ENCODE measurements at regions of chr15 and their contacts with region 1.

Region 1: DNA sequence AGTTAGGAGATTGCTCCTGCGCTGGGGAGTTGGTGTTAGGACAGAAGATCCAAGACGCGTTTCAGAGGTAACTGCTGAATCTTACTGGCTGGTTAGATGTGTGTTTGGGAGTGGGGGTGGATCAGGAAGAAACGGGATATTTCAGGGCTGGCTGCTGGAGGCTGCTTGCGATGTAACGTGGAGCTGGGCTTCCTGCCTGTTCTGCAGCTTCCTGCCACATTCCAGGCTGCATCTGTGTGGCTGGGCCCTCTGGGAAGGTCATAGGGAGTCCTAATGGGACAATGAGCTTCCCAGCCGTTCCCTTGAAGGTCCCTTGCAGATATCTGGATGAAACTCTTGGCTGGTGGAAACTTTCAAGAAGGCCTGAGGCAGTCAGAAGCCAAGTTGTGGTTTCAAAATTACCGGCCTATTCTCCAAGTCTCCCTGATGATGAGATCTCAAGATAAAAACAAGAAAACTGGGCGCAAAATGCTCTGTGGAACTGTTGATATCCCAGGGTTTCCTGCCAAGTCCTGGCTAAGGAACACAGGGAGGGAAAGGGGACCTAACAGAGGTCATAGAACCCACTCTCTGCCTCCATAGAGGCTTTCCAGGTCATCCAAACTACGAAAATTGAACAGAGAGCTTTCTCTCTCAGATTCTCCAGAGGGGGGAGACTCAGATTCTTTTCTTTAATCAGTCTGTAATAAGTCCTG is 67.0 kb downstream of the NOX5 start:
- DNase-seq: peak; percentile 55
- H3K4me3 ChIP-seq: peak overlapping the region; percentile 53
- H3K27ac ChIP-seq: peak overlapping the region; percentile 93
- H3K4me1 ChIP-seq: peaks cover 62% of the 10 kb centered on the region
- H3K27me3 ChIP-seq: no peaks in the 10 kb centered on the region
- CTCF ChIP-seq: no peak

Region 2: DNA sequence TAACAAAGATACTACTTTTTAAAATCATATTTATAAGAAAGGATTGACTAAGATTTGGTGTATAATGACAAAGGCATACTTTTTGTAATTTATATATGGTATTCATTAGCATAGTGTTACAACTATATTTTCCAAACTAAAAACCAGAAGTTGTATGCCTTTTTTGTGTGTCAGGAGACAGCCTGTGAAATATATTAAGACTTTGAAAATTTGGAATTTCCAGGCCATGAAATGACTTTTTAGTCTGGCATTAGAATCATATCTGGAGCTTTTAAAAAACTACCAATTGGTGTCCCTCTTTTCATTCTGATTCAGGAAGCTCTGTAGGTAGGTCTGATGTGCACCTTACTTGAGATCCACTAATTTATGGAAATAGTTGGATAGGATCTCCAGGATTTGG is 918.3 kb before region 1 on chr15:
- CTCF ChIA-PET with region 1: no interaction called
- POLR2A ChIA-PET with region 1: interaction called, 32 read pairs
- intact Hi-C with region 1: no loop called
- DNase-seq: no peak
- H3K4me3 ChIP-seq: no peak overlapping the region
- H3K27ac ChIP-seq: no peak overlapping the region
- H3K4me1 ChIP-seq: no peaks in the 10 kb centered on the region
- H3K27me3 ChIP-seq: no peaks in the 10 kb centered on the region
- CTCF ChIP-seq: no peak

Region 3: DNA sequence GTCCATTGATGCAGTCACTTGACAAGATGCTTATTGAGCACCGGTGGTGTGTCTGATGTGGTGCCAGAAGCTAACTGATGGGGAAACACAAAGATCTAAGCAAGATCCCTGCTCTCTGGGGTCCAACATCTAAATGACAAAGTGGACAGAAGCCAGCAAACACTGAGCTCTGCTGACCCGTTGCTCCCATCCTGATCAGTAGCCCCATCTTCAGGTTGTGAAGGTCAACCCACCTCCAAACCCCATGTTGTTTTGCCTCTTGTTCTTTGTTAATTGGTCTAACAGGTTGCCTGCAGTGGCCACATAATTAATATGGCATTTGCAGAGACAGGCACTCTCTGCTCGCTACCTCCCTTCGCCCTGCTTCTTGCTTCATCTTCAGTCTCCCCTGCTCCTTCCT is 57.5 kb after region 1 on chr15:
- CTCF ChIA-PET with region 1: no interaction called
- POLR2A ChIA-PET with region 1: interaction called, 12 read pairs
- intact Hi-C with region 1: no loop called
- DNase-seq: no peak
- H3K4me3 ChIP-seq: no peak overlapping the region
- H3K27ac ChIP-seq: no peak overlapping the region
- H3K4me1 ChIP-seq: peaks cover 5% of the 10 kb centered on the region
- H3K27me3 ChIP-seq: no peaks in the 10 kb centered on the region
- CTCF ChIP-seq: no peak

Region 4: DNA sequence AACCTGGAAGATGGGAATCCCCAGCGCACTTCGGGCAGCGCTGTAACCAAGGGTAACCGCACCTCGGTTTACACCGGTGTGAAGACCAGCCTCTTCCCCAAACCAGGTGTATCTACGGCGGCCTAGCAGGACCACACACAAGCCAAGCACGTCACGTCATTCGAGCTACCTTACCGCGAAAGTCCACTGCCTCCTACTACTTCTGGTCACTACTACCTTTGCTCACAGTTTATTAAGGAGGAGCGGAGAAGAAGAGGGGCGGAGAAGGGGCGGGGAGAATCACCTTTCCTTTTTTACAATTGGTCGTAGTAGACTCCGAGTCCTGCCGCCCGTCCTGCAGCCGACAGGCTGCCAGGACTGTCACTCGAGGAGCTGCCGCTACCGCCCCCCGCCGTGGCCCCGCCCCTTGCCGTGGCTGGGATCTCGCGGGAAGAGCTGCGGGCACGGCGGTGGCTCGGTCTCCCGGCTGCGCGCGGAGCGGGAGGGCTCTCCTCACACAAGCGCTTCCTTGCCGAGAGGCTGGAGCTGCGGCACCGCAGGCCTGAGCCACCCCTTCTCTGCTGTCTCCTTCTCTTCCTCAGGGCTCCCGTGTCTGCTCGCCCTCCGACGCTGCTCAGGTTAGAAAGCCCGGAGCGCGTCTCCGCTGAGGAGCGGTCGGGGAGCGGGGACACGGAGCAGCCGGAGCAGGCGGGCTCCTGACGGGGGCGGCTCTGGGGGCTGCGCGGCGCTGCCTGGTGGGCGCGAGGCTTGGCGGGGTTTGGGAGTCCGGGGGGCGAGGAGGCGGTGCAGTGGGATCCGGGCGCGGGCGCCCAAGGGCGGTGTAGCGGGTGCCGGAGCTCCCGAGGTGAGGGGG is 78.9 kb after region 1 on chr15 and contains the start of gene GLCE:
- CTCF ChIA-PET with region 1: no interaction called
- POLR2A ChIA-PET with region 1: no interaction called
- intact Hi-C with region 1: loop called (anchors 5 kb)
- DNase-seq: peak; percentile 98
- H3K4me3 ChIP-seq: peak within 1 kb of the TSS; percentile 96
- H3K27ac ChIP-seq: peak within 1 kb of the TSS; percentile 95
- H3K4me1 ChIP-seq: peaks cover 28% of the 10 kb centered on the region
- H3K27me3 ChIP-seq: no peaks in the 10 kb centered on the region
- CTCF ChIP-seq: no peak
- total RNA-seq, gene GLCE: 41.9 and 44.6 TPM in 2 replicates